ENCODE measurements at regions of chrX and their contacts with region 1.

Region 1: DNA sequence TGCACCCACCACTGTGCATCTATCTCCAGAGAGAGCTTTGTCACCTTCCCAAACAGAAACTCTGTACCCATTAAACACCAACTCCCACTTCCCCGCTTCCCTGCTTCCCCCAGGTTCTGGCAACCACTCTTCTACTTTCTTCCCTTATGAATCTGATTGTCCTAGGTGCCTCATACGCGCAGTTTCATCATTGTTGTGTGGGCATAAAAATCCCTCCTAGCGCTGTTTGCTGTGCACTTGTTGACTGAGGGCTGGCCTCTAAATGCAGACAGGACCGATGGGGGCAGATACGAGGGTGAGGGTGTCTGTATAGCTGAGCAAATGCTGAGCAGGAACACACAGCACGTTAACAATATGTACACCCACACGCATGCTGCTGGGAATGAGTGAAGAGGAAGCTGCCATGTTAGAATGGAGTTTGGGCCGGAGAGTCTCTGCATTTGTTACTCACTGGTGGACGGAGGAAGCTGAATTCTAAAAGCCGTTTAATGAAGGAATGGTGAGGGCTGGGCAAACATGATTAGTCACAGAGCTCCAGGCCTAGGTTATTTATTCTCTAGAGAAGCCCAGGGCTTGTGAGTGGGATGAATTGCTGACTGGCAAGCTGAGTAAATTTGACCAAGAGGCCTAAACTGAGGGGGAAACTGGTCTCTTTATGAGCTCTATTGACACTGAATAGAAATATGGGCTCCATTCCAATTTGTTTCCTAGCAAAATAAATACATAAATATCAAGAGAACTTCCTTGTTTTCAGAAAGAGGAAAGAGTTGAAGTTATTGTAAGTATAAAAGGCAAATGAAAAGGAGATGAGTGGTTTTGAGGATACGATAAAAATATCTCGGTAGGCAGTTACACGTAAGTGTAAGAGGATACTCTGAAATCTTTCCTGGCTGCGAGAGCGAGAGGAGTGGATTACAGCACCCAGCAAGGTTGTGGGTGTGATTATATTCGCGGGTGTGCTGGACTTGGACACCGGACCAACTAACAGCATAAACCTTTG is 95.9 kb upstream of the RPS6KA3 start:
- DNase-seq: peak; percentile 61
- H3K4me3 Mint-ChIP-seq: peak overlapping the region; percentile 60
- H3K27ac Mint-ChIP-seq: peak overlapping the region; percentile 91
- H3K4me1 Mint-ChIP-seq: peaks cover 32% of the 10 kb centered on the region
- H3K27me3 Mint-ChIP-seq: no peaks in the 10 kb centered on the region
- CTCF ChIP-seq: no peak

Region 2: DNA sequence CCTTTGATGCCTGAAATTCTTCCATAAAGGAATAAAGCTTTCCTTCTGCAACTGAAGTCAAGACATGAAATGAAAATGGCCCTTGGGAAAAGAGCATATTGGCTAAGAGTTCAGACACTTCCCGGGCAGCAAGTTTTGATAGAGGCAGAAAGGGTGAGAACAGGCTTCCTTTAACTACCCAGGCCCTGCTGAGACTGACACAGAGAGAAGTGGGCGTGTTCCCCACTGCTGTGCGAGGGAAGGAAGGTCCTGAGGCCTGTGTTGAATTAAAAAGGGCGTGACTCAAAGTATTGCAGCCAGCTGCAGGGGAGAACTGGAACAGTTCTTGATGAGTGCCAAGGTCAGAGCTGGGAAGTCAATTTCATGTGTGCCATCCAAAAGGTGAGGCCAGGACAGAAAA is 1206.4 kb before region 1 on chrX:
- CTCF ChIA-PET with region 1: no interaction called
- intact Hi-C with region 1: no loop called
- DNase-seq: no peak
- H3K4me3 Mint-ChIP-seq: no peak overlapping the region
- H3K27ac Mint-ChIP-seq: no peak overlapping the region
- H3K4me1 Mint-ChIP-seq: no peaks in the 10 kb centered on the region
- H3K27me3 Mint-ChIP-seq: peaks cover 46% of the 10 kb centered on the region
- CTCF ChIP-seq: no peak

Region 3: GRCh38 chrX:20266810-20267606 is 95.6 kb before region 1 on chrX and contains the start of gene RPS6KA3:
- CTCF ChIA-PET with region 1: no interaction called
- intact Hi-C with region 1: loop called (anchors 2 kb)
- DNase-seq: peak; percentile 92
- H3K4me3 Mint-ChIP-seq: peak within 1 kb of the TSS; percentile 96
- H3K27ac Mint-ChIP-seq: peak within 1 kb of the TSS; percentile 87
- H3K4me1 Mint-ChIP-seq: peaks cover 22% of the 10 kb centered on the region
- H3K27me3 Mint-ChIP-seq: no peaks in the 10 kb centered on the region
- CTCF ChIP-seq: no peak
- total RNA-seq, gene RPS6KA3: 63.4 and 65.1 TPM in 2 replicates

Region 4: GRCh38 chrX:20515841-20516461 is 153.4 kb after region 1 on chrX:
- CTCF ChIA-PET with region 1: interaction called, 3 read pairs
- intact Hi-C with region 1: loop called (anchors 5 kb)
- DNase-seq: peak; percentile 22
- H3K4me3 Mint-ChIP-seq: no peak overlapping the region
- H3K27ac Mint-ChIP-seq: peak overlapping the region; percentile 20
- H3K4me1 Mint-ChIP-seq: peaks cover 48% of the 10 kb centered on the region
- H3K27me3 Mint-ChIP-seq: no peaks in the 10 kb centered on the region
- CTCF ChIP-seq: no peak

Region 5: GRCh38 chrX:20767346-20767745 is 404.8 kb after region 1 on chrX:
- CTCF ChIA-PET with region 1: no interaction called
- intact Hi-C with region 1: no loop called
- DNase-seq: no peak
- H3K4me3 Mint-ChIP-seq: no peak overlapping the region
- H3K27ac Mint-ChIP-seq: no peak overlapping the region
- H3K4me1 Mint-ChIP-seq: no peaks in the 10 kb centered on the region
- H3K27me3 Mint-ChIP-seq: no peaks in the 10 kb centered on the region
- CTCF ChIP-seq: no peak

Measured in Calu3 (cell line).